Spleen (tissue), 13 donors: ENCODE measurements at regions of chr10 and their contacts with region 1.

Region 1: GRCh38 chr10:73096449-73097304 is at the start of gene P4HA1:
- DNase-seq: peak; percentile 100
- H3K4me3 ChIP-seq: peak within 1 kb of the TSS; percentile 61 to 99 (median 85)
- H3K27ac ChIP-seq: peak within 1 kb of the TSS; percentile 89 to 98 (median 96)
- H3K4me1 ChIP-seq: peaks cover 13 to 46% (median 25%) of the 10 kb centered on the region in 6 donors
- H3K27me3 ChIP-seq: no peaks in the 10 kb centered on the region
- CTCF ChIP-seq: peak; percentile 63 to 91 (median 78)
- POLR2A ChIP-seq: peak; percentile 79 to 95 (median 91)
- total RNA-seq, gene P4HA1: 25.4 to 74.1 (median 29.3) TPM

Region 2: DNA sequence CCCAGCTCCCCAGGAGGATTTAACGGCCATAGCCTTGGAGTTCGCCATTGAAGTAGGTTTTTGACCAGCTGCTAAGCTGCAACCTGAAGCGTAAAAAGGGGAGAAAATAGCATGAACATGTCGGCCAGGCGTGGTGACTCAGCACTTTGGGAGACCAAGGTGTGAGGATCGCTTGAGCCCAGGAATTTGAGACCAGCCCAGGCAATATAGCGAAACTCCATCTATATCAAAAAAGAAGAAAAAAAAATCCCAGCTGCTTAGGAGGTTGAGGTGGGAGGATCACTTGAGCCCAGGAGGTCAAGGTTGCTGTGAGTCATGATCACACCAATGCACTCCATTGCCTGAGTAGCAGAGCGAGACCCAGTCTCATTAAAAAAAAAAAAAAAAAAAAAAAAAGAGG is 437.0 kb before region 1 on chr10:
- intact Hi-C with region 1: no loop called
- DNase-seq: no peak
- H3K4me3 ChIP-seq: no peak overlapping the region
- H3K27ac ChIP-seq: no peak overlapping the region
- H3K4me1 ChIP-seq: no peaks in the 10 kb centered on the region
- H3K27me3 ChIP-seq: no peaks in the 10 kb centered on the region
- CTCF ChIP-seq: no peak
- POLR2A ChIP-seq: no peak

Region 3: DNA sequence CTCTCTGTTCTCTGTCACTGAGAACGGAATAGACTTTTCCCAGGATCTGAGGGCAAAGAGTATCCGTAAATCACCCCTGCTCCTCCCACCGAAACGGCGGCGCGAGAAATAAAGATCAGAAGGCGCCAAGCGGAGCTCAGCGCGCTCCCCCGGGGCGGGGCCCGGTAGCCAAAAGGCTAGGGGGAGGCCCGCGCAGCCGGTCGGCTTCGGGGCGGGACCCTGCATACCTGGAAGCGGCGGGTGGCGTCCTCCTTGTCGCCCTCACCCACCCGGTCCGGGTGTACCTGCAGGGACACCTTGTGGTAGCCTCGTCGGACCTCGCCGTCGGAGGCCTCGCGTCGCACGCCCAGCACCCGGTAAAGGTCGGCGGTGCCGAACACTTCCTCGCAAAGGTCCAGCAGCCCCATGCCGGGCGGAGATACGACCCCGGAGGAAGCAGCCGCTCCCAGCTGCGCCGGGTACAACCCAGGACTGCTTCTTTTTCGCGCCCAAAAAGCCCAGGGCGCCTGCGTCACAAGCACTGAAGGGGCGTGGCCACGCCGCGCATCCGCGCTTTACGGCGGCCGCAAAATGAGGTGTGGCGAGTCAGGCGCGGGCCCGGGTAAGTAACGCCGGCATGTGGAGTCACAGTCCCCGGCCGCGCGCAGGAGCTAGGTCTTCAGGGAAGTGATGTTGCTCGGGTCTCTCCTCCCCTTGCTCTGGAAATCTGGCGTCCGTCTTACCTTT is 150.3 kb after region 1 on chr10 and contains the start of gene DNAJC9:
- intact Hi-C with region 1: loop called (anchors 10 kb)
- DNase-seq: peak; percentile 99
- H3K4me3 ChIP-seq: peak within 1 kb of the TSS; percentile 82 to 99 (median 92)
- H3K27ac ChIP-seq: peak within 1 kb of the TSS; percentile 80 to 94 (median 90)
- H3K4me1 ChIP-seq: peaks cover 22 to 79% (median 63%) of the 10 kb centered on the region in 6 donors
- H3K27me3 ChIP-seq: no peaks in the 10 kb centered on the region
- CTCF ChIP-seq: peak in 4 of 11 experiments; percentile 10 to 18 (median 12)
- POLR2A ChIP-seq: peak; percentile 31 to 78 (median 68)
- total RNA-seq, gene DNAJC9: 13.3 to 34.8 (median 21.7) TPM